ENCODE measurements at regions of chr11 and their contacts with region 1.

Region 1: GRCh38 chr11:126716456-126717083 is 284.0 kb downstream of the KIRREL3 start:
- DNase-seq: peak in 1 of 2 experiments; percentile 83
- H3K4me3 ChIP-seq: no peak overlapping the region
- H3K27ac ChIP-seq: no peak overlapping the region
- H3K4me1 ChIP-seq: peaks cover 0 to 7% (median 0%) of the 10 kb centered on the region in 4 experiments; a peak in 2 of 7 replicates
- H3K27me3 ChIP-seq: no peaks in the 10 kb centered on the region
- CTCF ChIP-seq: peak; percentile 60 to 85 (median 78)
- EP300 ChIP-seq: no peak
- POLR2A ChIP-seq: no peak
- RAD21 ChIP-seq: peak; percentile 84 to 87

Region 2: GRCh38 chr11:126700773-126701519 is 15.6 kb before region 1 on chr11:
- CTCF ChIA-PET with region 1: interaction called, 76 read pairs
- POLR2A ChIA-PET with region 1: interaction called, 3 read pairs
- DNase-seq: no peak
- H3K4me3 ChIP-seq: no peak overlapping the region
- H3K27ac ChIP-seq: no peak overlapping the region
- H3K4me1 ChIP-seq: peaks cover 0 to 19% (median 2%) of the 10 kb centered on the region in 4 experiments; a peak in 4 of 7 replicates
- H3K27me3 ChIP-seq: no peaks in the 10 kb centered on the region; a peak in 1 of 7 replicates
- CTCF ChIP-seq: no peak
- EP300 ChIP-seq: no peak
- POLR2A ChIP-seq: no peak
- RAD21 ChIP-seq: no peak

Region 3: GRCh38 chr11:126764231-126764630 is 47.7 kb after region 1 on chr11:
- CTCF ChIA-PET with region 1: interaction called, 13 read pairs
- POLR2A ChIA-PET with region 1: no interaction called
- DNase-seq: no peak
- H3K4me3 ChIP-seq: no peak overlapping the region
- H3K27ac ChIP-seq: no peak overlapping the region
- H3K4me1 ChIP-seq: no peaks in the 10 kb centered on the region
- H3K27me3 ChIP-seq: no peaks in the 10 kb centered on the region
- CTCF ChIP-seq: peak in 1 of 3 experiments; percentile 43; a peak in 2 of 4 replicates
- EP300 ChIP-seq: no peak
- POLR2A ChIP-seq: no peak
- RAD21 ChIP-seq: peak; percentile 34 to 51; a peak in 3 of 4 replicates

Region 4: DNA sequence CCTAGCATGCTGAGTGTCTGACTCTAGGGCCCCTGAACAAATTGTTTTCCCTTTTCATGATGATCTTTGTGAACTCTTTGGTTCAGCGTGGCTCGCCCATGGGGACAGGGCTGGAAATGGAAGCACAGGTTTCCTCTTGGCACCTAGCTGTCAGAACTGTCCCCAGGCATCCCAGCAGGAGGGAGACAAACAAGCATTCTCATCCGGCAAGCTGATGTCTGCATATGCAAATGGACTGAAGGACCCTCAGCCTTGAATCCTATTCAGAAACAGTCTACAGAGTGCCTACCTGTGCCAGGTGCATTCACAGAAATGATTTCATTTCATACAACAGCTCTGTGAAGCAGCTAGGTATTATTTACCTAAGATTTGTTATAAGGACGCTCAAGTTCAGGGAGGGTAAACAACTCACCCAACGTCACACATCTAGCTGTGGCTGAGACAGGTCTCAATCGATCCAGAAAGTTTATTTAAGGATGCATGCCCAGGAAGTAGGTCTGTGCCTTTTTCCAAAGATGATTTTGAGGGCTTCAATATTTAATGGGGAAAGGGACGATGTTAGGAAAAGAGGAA is 107.6 kb after region 1 on chr11:
- CTCF ChIA-PET with region 1: interaction called, 11 read pairs
- POLR2A ChIA-PET with region 1: no interaction called
- DNase-seq: peak in 1 of 2 experiments; percentile 1
- H3K4me3 ChIP-seq: no peak overlapping the region
- H3K27ac ChIP-seq: no peak overlapping the region
- H3K4me1 ChIP-seq: peaks cover 2 to 10% (median 4%) of the 10 kb centered on the region in 4 experiments; a peak in 5 of 7 replicates
- H3K27me3 ChIP-seq: no peaks in the 10 kb centered on the region
- CTCF ChIP-seq: no peak
- EP300 ChIP-seq: no peak
- POLR2A ChIP-seq: no peak
- RAD21 ChIP-seq: no peak

Region 5: DNA sequence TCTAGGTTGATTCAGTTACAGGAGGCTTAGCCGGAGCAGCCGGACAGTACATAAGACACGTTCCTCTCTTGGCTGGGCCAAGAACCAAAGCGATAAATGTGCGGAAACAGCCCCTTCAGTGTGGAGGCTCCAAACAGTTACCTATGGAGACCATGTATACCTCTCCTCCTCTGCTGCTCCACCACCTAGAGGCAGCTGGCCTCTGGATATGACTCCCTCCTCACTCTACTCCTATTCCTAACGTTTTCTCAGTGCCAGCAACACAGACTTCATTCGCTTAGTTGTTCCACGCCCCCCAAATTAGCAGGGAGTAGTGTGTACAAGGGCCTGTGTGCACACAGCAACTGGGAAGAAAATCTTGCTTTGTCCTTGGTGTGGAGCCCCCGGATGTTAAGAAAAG is 646.2 kb after region 1 on chr11:
- CTCF ChIA-PET with region 1: no interaction called
- POLR2A ChIA-PET with region 1: no interaction called
- DNase-seq: no peak
- H3K4me3 ChIP-seq: no peak overlapping the region
- H3K27ac ChIP-seq: no peak overlapping the region
- H3K4me1 ChIP-seq: peaks cover 0 to 5% (median 0%) of the 10 kb centered on the region in 4 experiments; a peak in 2 of 7 replicates
- H3K27me3 ChIP-seq: no peaks in the 10 kb centered on the region
- CTCF ChIP-seq: no peak
- EP300 ChIP-seq: no peak
- POLR2A ChIP-seq: no peak
- RAD21 ChIP-seq: no peak